Head of caudate nucleus (tissue), 42 donors: ENCODE measurements at regions of chr3 and their contacts with region 1.

Region 1: DNA sequence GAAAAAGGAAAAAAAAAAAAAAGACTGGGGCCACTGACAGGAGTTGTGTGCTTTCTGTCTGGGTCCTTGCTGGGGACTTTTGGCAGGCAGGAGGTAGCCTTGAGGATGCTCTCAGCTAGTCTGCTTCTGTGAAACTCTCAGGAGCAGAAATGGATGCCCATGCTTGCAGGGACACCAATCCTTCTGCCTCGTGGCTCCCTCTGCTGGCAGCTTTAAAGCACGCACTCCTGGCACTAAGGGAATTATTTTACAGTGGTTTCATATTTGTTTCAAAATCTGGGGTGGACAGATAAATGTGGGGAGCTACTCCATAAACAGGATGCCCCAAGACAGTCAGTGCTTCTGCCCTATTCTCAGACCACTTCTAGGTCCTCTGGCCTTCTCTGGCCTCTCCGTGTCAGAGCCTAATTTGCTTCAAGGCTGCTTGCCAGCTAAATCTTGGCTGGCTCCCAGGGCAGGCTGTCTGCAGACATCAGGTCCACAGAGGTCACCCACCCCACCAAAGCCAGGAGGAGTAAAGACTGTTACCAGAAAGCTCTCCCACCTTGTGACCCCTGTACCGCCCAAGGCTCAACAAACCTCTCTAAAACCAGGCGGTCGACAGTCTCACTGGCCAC is 17.1 kb downstream of the TRAIP start:
- DNase-seq: peak; percentile 74 to 94 (median 86)

Region 2: DNA sequence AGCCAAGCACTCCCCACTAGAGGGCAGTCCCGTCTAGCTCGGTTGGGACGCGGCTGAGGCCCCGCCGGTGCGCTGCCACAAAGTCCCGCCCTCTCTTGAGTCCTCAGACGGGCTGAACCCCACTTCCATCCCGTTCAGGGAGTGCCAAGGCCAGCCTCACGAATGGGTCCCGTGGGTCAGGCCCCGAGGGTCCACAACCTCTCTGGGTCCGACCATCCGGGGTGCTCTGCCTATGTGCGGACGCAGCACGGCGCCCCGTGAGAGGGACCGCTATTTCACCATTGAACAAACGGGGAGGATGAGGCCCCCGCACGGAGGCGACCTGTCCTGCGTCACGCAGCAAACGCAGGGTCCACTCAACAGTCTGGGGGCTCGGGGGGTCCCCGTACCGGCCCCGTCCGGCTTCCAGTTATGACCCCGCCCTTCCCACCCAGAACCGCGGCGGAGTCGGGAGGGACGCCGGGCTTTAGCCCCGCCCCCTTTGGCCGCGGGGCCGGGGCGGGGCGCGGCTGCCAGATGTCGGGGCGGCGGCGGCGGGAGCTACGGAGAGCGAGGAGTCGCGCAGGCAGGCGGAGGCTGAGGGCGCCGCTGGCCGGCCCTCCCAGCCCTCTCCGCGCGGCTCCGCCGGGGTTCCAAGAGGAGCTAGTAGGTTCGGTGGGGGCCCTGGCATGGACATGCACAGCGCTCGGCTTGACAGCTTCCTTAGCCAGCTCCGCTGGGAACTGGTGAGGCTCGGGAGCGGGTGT is 36.4 kb before region 1 on chr3 and contains the start of gene INKA1:
- intact Hi-C with region 1: loop called (anchors 5 kb)
- DNase-seq: peak; percentile 82 to 96 (median 91)